ENCODE measurements at regions of chr17 and their contacts with region 1.

Region 1: GRCh38 chr17:45172454-45173286 is 11.0 kb downstream of the HEXIM2 start:
- DNase-seq: peak; percentile 97
- ATAC-seq: peak; percentile 63
- H3K4me3 ChIP-seq: peak overlapping the region; percentile 46; the same call in 1 of the 2 replicates
- H3K27ac ChIP-seq: peak overlapping the region; percentile 95
- H3K4me1 ChIP-seq: peaks cover 59% of the 10 kb centered on the region
- H3K27me3 ChIP-seq: no peaks in the 10 kb centered on the region
- CTCF ChIP-seq: peak; percentile 34; the same call in 1 of the 2 replicates

Region 2: DNA sequence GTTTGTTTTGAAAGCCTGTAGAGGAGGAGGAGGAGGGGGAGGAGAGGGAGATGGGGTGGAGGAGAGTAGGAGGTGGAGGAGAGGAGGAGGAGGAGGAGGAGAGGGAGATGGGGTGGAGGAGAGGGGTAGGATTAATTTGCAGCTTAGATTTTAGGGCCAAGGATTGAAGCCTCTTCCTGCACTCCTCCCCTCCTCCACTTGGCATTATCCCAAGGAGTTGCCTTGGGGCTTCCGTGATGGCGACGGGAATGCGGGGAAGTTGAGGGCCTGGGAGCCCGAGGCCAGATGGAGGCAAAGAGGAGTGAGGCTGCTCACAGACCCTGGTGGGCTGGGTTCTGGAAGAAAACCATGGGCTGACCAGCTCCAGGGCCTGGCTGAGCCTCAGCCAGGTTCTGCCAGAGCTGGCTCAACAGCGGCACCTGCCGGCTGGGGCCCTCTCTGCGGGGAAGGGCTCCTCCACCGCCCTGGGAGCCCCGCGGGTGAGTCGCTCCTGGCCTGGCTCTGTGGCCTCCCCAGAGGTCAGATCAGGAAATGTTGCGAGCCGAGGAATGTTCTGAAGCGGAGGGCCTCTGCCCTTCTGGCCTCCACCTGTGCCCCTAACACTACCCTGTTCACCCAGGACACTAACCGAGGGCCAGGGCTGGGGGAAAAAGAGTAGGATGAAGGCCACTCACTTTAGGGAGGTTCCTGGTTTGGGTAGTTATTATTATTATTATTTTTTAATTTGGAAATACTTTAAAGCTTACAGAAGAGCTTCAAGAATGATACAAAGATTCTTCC is 25.1 kb after region 1 on chr17:
- CTCF ChIA-PET with region 1: interaction called, 28 read pairs
- POLR2A ChIA-PET with region 1: interaction called, 5 read pairs
- intact Hi-C with region 1: no loop called
- DNase-seq: peak; percentile 99
- ATAC-seq: peak; percentile 99
- H3K4me3 ChIP-seq: peak overlapping the region; percentile 8; the same call in 1 of the 2 replicates
- H3K27ac ChIP-seq: no peak overlapping the region
- H3K4me1 ChIP-seq: peaks cover 16% of the 10 kb centered on the region
- H3K27me3 ChIP-seq: no peaks in the 10 kb centered on the region
- CTCF ChIP-seq: peak; percentile 100